Activated CD4-positive, alpha-beta T cell treated with anti-CD3 and anti-CD28 coated beads for 36 hours (primary cell): ENCODE measurements at regions of chr13 and their contacts with region 1.

Region 1: DNA sequence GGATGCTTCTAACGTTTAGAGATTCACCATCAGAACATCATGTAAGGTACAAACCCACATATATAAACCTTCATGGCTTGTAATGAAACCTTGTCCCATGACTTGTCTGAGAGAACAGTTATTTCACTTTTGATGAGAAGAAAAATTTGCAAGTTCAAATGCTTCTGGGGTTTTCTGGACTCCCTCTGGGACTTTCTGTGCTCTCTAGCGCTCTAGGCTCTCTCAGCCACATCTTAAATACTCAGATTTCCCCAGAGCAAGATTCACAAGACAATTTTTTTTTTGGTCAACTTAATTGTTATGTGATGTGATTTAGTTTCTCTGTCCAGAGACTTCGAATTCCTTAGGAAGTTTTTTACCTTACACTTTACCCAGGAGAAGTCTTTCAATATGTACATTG is 282.8 kb upstream of the EDNRB start:
- DNase-seq: no peak
- ATAC-seq: no peak
- H3K4me3 Mint-ChIP-seq: no peak overlapping the region
- H3K27ac Mint-ChIP-seq: no peak overlapping the region
- H3K4me1 Mint-ChIP-seq: no peaks in the 10 kb centered on the region
- H3K27me3 Mint-ChIP-seq: no peaks in the 10 kb centered on the region

Region 2: DNA sequence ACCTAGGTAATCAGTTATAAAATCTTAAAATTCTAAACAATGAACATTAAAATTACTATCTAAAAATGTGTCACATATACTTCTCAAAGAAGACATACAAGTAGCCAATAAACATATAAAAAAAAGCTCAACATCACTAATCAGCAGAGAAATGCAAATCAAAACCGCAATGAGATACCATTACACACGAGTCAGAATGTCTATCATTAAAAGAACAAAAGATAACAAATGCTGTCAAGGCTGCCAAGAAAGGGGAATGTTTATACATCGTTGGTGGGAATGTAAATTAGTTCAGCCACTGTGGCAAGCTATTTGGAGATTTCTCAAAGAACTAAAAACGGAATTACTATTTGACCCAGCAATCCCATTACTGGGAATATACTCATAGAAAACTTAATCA is 27.5 kb after region 1 on chr13:
- CTCF ChIA-PET with region 1: no interaction called
- POLR2A ChIA-PET with region 1: no interaction called
- intact Hi-C with region 1: loop called in 1 of 2 experiments (anchors 1 kb)
- DNase-seq: no peak
- ATAC-seq: no peak
- H3K4me3 Mint-ChIP-seq: no peak overlapping the region
- H3K27ac Mint-ChIP-seq: no peak overlapping the region
- H3K4me1 Mint-ChIP-seq: no peaks in the 10 kb centered on the region
- H3K27me3 Mint-ChIP-seq: peaks cover 4% of the 10 kb centered on the region